Ascending aorta (tissue), 2 donors: ENCODE measurements at regions of chr2 and their contacts with region 1.

Region 1: GRCh38 chr2:25324905-25325592 is 16.7 kb downstream of the DNMT3A start:
- DNase-seq: peak; percentile 89 to 98
- H3K4me3 ChIP-seq: peak overlapping the region in 1 of 2 donors; percentile 36
- H3K27ac ChIP-seq: peak overlapping the region; percentile 80 to 86
- H3K4me1 ChIP-seq: peaks cover 8 to 40% of the 10 kb centered on the region in 2 donors
- H3K27me3 ChIP-seq: no peaks in the 10 kb centered on the region
- CTCF ChIP-seq: peak in 1 of 3 experiments; percentile 11

Region 2: DNA sequence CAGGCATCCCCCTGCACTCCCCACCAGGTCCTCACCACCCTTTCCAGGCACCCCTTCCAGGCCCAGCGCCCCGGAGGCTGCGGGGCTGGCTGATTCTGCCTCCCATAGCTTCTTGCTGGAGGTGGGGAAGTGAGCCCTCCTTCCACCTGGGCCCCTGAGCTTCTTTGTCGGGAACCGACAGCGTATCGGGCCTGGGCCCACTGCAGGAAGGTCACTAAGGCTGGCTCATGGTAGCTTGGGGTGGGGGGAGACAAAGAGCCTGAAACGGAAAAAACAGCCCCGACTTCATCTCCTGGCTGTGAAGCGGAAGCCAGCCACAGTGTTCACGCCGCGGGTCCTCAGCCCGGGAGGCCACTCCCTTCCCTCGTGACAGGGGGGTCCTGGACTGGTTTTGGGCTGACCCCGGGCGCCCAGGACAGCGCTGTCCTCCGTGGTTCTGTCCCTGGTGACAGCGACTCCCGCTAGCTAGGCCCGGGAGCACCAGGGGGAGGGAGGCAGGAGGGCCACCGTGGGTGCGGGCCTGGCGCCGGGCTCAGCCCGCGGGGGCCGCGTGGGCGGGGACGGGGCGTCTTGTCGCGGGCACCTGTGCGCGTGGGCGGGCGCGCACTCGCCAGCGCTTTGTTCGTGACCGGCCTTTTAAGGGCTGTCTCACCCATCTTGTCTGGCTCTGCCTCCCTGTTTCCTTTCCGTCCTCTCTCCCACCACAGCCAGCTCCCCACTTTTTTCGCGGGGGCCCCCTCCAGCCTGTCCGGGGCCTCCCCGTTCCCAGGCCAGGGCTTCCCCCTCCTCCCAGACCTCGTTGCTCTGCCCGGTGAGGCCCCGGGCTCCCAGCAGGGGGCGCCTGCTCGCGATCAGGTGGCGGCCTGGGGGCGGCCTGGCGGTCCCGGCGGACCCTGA is 48.2 kb before region 1 on chr2:
- intact Hi-C with region 1: loop called (anchors 1 kb)
- DNase-seq: peak in 1 of 2 donors; percentile 84
- H3K4me3 ChIP-seq: peak overlapping the region; percentile 47 to 58
- H3K27ac ChIP-seq: peak overlapping the region; percentile 70 to 84
- H3K4me1 ChIP-seq: peaks cover 0 to 10% of the 10 kb centered on the region in 2 donors
- H3K27me3 ChIP-seq: no peaks in the 10 kb centered on the region
- CTCF ChIP-seq: peak; percentile 77 to 93 (median 85)

Region 3: GRCh38 chr2:25294573-25295462 is 30.2 kb before region 1 on chr2:
- intact Hi-C with region 1: loop called (anchors 2 kb)
- DNase-seq: peak; percentile 71 to 91
- H3K4me3 ChIP-seq: peak overlapping the region; percentile 43
- H3K27ac ChIP-seq: peak overlapping the region; percentile 89 to 93
- H3K4me1 ChIP-seq: peaks cover 18 to 47% of the 10 kb centered on the region in 2 donors
- H3K27me3 ChIP-seq: no peaks in the 10 kb centered on the region
- CTCF ChIP-seq: peak in 1 of 3 experiments; percentile 17